Right lobe of liver (tissue), 6 donors: ENCODE measurements at regions of chr7 and their contacts with region 1.

Region 1: DNA sequence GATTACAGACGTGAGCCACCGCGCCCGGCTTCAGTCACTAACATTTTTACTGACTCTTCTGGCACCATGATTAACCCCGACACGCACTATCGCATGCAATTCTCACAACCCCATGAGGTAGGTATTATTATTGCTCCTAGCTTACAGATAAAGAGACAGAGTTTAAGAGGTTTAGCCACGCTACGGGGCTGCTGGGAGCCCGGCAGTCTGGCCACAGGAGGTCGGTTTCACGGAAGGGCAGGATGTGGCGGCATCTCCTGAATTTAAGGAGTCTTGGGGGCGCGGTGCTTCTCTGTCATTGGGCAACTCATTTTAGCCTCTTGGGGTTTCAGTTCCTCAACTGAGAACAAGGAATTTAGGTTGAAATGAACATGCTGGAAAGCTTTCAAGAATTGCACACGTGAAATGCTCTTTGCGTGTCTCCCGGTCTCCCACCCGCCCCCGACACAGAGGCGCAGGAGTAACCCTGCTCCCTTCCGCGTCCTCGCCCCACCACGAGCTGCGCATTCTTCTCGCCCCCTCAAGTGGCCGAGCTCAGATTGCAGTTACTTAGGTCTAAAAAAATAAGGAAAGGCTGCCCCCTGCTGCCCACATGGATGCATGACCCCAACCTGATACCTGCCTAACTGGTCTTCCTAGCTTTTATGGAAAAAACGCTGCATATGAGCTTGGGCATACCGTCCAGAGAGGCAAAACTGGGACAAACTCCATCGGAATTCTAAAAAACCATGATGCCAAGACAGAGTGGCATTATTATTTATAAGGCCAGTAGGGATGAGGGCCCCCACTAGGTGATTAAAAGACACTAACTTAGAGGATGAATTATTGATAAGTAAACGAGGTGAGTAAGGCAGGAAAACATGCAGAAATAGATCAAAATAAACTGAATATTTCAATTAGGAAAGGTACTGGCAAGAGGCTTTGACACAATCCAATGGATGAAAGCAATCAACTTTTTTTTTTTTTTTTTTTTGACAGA is 12.4 kb downstream of the PRSS2 start:
- DNase-seq: peak; percentile 83 to 86 (median 85)
- ATAC-seq: peak; percentile 94 to 99 (median 96)
- H3K4me3 ChIP-seq: peak overlapping the region in 1 of 3 donors; percentile 23
- H3K27ac ChIP-seq: no peak overlapping the region
- H3K4me1 ChIP-seq: no peaks in the 10 kb centered on the region
- H3K27me3 ChIP-seq: no peaks in the 10 kb centered on the region
- CTCF ChIP-seq: peak; percentile 81 to 91 (median 85)
- POLR2A ChIP-seq: no peak

Region 2: DNA sequence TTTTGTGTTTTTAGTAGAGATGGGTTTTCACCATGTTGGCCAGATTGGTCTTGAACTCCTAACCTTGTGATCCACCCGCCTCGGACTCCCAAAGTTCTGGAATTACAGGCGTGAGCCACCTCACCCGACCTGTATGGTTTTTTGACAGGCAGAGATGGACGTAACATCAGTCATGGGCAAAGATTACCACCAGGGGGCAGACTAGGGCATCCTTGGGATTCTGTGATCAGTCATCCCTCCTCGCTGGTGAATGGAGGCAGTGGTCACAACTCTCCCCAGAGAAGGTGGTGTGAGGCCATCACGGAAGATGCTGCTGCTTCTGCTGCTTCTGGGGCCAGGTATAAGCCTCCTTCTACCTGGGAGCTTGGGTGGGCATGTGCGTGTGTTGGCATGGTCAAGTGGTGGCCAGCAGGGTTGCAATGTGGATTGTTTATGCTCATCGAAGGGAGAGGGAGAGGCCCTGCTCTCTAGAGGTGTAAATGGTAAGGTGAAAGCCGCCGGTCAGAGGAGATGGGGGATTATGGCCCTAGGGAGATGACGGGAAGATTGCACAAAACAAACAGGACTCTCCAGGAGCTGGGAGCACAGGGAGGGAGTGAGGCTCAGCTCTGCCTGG is 156.7 kb before region 1 on chr7:
- intact Hi-C with region 1: loop called (anchors 10 kb)
- DNase-seq: peak in 2 of 3 donors; percentile 28 to 57
- ATAC-seq: peak; percentile 75 to 83 (median 78)
- H3K4me3 ChIP-seq: no peak overlapping the region
- H3K27ac ChIP-seq: no peak overlapping the region
- H3K4me1 ChIP-seq: no peaks in the 10 kb centered on the region
- H3K27me3 ChIP-seq: no peaks in the 10 kb centered on the region
- CTCF ChIP-seq: peak; percentile 37 to 64 (median 56)
- POLR2A ChIP-seq: no peak